ENCODE measurements at regions of chr19 and their contacts with region 1.

Region 1: DNA sequence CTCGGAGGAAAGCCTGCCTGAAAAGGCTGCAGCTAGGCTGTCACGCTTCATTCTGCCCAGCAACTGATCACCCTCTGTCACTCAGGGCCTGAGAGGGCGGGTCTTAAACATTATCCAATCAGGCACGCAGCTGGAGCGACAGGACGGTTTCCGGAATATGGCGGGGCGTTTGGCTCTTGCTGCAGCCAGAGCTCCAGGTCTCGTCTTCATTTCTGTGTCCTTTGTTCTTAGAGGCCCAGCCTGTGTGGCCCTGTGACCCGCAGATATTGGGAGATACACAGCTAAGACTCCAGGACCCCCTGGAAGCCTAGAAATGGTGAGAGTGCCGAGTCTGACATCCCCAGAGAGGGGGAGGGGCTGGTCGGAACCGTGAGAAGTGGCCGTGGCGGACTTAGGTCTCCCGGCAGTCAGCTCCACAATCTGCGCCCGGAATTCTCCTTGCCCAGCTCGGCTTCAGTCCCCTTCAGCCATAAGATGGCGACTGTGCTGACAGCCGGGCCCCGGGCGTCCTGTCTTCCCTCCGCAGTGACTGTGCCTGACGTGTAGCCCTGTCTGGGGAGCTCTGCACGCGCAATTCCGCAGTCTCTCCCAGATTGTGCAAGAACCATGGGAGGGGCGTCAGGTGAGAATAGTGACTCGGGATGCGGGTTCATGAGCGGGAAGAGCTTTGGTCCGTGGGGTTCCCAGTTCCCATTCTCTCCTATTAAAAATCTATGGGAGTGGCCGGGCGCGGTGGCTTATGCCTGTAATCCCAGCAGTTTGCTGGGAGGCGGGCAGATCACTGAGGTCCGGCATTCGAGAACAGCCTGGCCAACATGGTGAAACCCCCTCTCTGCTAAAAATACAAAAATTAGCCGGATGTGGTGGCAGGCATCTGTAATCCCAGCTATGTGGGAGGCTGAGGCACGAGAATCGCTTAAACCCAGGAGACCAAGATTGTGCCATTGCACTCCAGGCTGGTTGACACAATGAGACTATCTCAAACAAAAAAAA is at the start of gene ZNF429:
- DNase-seq: peak; percentile 96
- ATAC-seq: peak; percentile 100
- H3K4me3 Mint-ChIP-seq: peak within 1 kb of the TSS; percentile 100
- H3K27ac Mint-ChIP-seq: peak within 1 kb of the TSS; percentile 99
- H3K4me1 Mint-ChIP-seq: peaks cover 28% of the 10 kb centered on the region
- H3K27me3 Mint-ChIP-seq: no peaks in the 10 kb centered on the region
- total RNA-seq, gene ZNF429: 13.0 to 14.0 TPM

Region 2: DNA sequence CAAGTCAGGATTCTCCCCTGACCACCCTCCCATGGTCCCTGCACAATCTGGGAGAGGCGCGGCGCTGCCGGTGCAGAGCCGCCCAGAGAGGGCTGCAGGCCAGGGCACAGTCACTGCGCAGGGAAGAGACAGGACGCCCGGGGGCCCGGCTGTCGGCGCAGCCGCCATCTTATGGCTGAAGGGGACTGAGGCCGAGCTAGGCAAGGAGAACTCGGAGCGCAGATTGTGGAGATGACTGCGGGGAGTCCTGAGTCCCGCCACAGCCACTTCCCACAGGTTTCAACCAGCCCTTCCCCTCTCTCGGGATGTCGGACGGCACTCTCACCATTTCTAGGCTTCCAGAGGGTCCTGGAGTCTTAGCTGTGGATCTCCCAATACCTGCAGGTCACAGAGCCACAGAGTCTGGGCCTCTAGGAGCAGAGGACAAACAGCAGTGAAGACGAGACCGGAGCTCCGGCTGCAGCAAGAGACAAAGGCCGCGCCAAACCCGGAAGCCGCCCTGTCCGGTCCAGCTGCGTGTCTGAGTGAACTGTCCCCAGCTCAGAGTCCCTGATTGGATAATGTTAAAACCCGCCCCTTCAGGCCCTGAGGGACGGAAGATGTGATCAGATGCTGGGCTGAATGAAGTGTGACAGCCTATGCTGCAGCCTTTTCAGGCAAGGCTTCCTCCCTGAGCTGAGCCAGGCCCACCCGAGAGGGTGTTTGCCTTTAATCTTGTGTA is 176.7 kb before region 1 on chr19 and contains the start of gene ZNF708:
- CTCF ChIA-PET with region 1: no interaction called
- POLR2A ChIA-PET with region 1: interaction called, 19 read pairs
- DNase-seq: peak; percentile 91
- ATAC-seq: peak; percentile 99
- H3K4me3 Mint-ChIP-seq: peak within 1 kb of the TSS; percentile 99
- H3K27ac Mint-ChIP-seq: peak within 1 kb of the TSS; percentile 99
- H3K4me1 Mint-ChIP-seq: peaks cover 28% of the 10 kb centered on the region
- H3K27me3 Mint-ChIP-seq: no peaks in the 10 kb centered on the region
- total RNA-seq, gene ZNF708: 16.4 to 17.0 TPM

Region 3: DNA sequence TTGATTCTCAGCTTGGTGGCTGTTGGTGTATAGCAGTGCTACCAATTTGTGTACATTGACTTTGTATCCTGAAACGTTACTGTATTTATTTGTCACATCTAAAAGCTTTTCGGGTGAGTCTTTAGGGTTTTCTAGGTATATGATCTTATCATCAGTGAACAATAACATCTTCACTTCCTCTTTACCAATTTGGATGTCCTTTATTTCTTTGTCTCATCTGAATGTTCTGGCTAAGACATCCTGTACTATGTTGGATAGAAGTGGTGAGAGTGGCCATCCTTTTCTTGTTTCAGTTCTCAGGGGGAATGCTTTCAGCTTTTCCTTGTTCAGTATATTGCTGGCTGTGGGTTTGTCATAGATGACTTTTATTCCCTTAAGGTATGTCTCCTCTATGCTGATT is 152.9 kb before region 1 on chr19:
- CTCF ChIA-PET with region 1: no interaction called
- POLR2A ChIA-PET with region 1: no interaction called
- DNase-seq: no peak
- ATAC-seq: no peak
- H3K4me3 Mint-ChIP-seq: no peak overlapping the region
- H3K27ac Mint-ChIP-seq: no peak overlapping the region
- H3K4me1 Mint-ChIP-seq: peaks cover 6% of the 10 kb centered on the region
- H3K27me3 Mint-ChIP-seq: no peaks in the 10 kb centered on the region

Region 4: DNA sequence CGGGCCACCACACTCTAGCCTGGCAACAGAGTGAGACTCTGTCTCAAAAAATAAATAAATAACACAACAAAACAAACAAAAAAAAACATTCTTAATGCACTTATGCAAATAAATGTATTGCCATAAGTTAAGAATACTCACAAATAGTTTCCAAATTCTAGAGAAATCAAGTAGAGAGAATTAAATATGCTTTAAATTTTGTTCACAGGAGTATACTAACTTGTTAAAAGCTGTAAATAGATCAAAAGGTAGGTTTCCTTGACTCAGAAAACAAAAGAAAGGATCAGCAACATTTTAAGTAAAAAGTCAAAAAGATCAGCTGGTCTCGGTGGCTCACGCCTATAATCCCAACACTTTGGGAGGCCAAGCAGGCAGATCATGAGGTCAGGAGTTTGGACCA is 50.9 kb before region 1 on chr19:
- CTCF ChIA-PET with region 1: no interaction called
- POLR2A ChIA-PET with region 1: no interaction called
- DNase-seq: no peak
- ATAC-seq: no peak
- H3K4me3 Mint-ChIP-seq: no peak overlapping the region
- H3K27ac Mint-ChIP-seq: no peak overlapping the region
- H3K4me1 Mint-ChIP-seq: no peaks in the 10 kb centered on the region
- H3K27me3 Mint-ChIP-seq: no peaks in the 10 kb centered on the region

Region 5: GRCh38 chr19:21474671-21475181 is 31.0 kb before region 1 on chr19:
- CTCF ChIA-PET with region 1: no interaction called
- POLR2A ChIA-PET with region 1: interaction called, 21 read pairs
- DNase-seq: peak; percentile 91
- ATAC-seq: peak; percentile 100
- H3K4me3 Mint-ChIP-seq: peak overlapping the region; percentile 83
- H3K27ac Mint-ChIP-seq: peak overlapping the region; percentile 82
- H3K4me1 Mint-ChIP-seq: peaks cover 8% of the 10 kb centered on the region
- H3K27me3 Mint-ChIP-seq: no peaks in the 10 kb centered on the region

Region 6: DNA sequence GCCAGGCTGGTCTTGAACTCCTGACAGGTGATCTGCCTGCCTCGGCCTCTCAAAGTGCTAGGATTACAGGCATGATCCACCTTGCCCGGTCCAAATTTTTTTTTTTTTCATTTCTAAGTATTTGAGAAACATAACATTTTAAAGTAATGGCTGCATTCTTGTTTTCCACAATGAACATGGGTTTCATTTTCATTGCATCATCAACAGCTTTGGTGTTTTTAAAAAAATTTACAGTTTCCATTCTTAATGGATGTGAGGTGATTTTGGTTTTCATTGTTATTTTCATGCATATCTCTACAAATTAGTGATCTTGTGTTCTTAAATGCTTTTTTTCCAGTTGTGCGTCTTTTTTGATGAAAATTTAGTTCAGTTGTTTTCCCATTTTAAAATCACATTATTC is 27.1 kb after region 1 on chr19:
- CTCF ChIA-PET with region 1: no interaction called
- POLR2A ChIA-PET with region 1: no interaction called
- DNase-seq: no peak
- ATAC-seq: no peak
- H3K4me3 Mint-ChIP-seq: no peak overlapping the region
- H3K27ac Mint-ChIP-seq: no peak overlapping the region
- H3K4me1 Mint-ChIP-seq: no peaks in the 10 kb centered on the region
- H3K27me3 Mint-ChIP-seq: no peaks in the 10 kb centered on the region

Region 7: DNA sequence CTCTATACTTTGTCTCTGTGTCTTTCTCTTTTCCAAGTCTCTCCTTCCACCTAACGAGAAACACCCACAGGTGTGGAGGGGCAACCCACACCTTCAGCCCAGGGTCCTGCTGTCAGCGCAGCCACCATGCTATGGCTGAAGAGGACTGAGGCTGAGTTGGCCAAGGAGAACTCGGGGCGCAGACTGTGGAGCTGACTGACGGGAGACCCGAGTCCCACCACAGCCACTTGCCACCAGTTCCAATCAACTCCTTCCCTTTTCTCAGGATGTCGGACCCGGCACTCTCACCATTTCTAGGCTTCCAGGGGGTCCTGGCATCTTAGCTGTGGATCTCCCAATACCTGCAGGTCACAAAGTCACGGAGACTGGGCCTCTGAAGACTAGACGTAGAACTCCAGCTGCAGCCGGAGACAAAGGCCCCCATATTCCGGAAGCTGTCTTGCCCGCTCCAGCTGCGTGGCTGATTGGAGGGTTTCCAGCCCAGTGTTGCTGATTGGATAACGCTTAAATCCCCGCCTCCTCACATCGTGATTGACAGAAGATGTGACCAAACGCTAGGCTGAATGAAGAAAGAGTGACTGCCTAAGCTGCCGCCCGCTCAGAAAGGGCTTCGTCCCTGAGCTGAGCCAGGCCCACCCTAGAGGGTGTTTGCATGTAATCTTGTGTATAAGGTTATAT is 63.2 kb after region 1 on chr19:
- CTCF ChIA-PET with region 1: interaction called, 6 read pairs
- POLR2A ChIA-PET with region 1: interaction called, 18 read pairs
- DNase-seq: peak; percentile 92
- ATAC-seq: peak; percentile 99
- H3K4me3 Mint-ChIP-seq: peak overlapping the region; percentile 94
- H3K27ac Mint-ChIP-seq: peak overlapping the region; percentile 96
- H3K4me1 Mint-ChIP-seq: peaks cover 18% of the 10 kb centered on the region
- H3K27me3 Mint-ChIP-seq: no peaks in the 10 kb centered on the region

Region 8: GRCh38 chr19:21767065-21767800 is 261.5 kb after region 1 on chr19 and contains the start of gene ZNF100:
- CTCF ChIA-PET with region 1: no interaction called
- POLR2A ChIA-PET with region 1: interaction called, 17 read pairs
- DNase-seq: peak; percentile 94
- ATAC-seq: peak; percentile 99
- H3K4me3 Mint-ChIP-seq: peak within 1 kb of the TSS; percentile 92
- H3K27ac Mint-ChIP-seq: peak within 1 kb of the TSS; percentile 90
- H3K4me1 Mint-ChIP-seq: peaks cover 21% of the 10 kb centered on the region
- H3K27me3 Mint-ChIP-seq: no peaks in the 10 kb centered on the region
- total RNA-seq, gene ZNF100: 21.6 to 28.4 TPM

Region 9: DNA sequence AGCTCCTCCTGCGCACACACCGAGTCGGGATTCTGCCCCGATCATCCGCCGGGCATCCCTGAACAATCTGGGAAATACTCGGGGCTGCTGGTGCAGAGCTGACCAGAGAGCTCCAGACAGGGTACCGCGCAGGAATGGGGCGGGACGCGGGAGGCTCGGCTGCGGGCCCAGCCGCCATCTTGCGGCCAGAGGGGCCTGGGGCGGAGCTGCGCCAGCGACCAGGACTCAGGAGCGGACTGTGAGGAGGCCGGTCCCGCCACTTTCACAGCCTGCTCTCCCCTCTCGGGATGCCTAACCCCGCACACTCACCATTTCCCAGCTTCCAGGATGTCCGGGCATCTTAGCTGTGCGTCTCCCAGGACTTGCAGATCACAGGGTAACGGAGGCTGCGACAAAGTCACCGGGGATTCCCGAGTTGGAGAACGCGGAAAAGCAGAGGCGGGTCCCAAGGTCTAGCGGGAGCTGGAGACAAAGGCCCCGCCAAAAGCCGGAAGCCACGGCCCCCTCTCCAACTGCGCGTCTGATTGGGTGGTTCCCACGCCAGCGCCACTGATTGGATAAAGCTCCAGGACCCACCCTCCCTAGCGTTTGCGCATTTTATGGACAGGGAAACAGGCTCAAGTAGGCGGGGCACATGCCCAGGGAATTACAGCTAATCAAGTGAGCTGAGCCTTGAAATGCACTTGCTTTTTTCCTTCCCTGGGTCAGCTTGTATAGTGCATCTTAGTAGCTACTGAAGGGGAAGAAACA is 346.0 kb after region 1 on chr19:
- CTCF ChIA-PET with region 1: no interaction called
- POLR2A ChIA-PET with region 1: interaction called, 12 read pairs
- DNase-seq: peak; percentile 93
- ATAC-seq: peak; percentile 99
- H3K4me3 Mint-ChIP-seq: peak overlapping the region; percentile 93
- H3K27ac Mint-ChIP-seq: peak overlapping the region; percentile 92
- H3K4me1 Mint-ChIP-seq: peaks cover 29% of the 10 kb centered on the region
- H3K27me3 Mint-ChIP-seq: no peaks in the 10 kb centered on the region